Esophagus squamous epithelium (tissue), 5 donors: ENCODE measurements at regions of chr15 and their contacts with region 1.

Region 1: GRCh38 chr15:40906091-40906990 is 12.1 kb downstream of the VPS18 start:
- DNase-seq: no peak
- H3K4me3 ChIP-seq: peak overlapping the region; percentile 29 to 65 (median 54)
- H3K27ac ChIP-seq: peak overlapping the region; percentile 83 to 93 (median 92)
- H3K4me1 ChIP-seq: peaks cover 36 to 85% (median 49%) of the 10 kb centered on the region in 3 donors
- H3K27me3 ChIP-seq: no peaks in the 10 kb centered on the region
- CTCF ChIP-seq: peak; percentile 69 to 91 (median 88)
- POLR2A ChIP-seq: peak in 1 of 4 donors; percentile 20

Region 2: DNA sequence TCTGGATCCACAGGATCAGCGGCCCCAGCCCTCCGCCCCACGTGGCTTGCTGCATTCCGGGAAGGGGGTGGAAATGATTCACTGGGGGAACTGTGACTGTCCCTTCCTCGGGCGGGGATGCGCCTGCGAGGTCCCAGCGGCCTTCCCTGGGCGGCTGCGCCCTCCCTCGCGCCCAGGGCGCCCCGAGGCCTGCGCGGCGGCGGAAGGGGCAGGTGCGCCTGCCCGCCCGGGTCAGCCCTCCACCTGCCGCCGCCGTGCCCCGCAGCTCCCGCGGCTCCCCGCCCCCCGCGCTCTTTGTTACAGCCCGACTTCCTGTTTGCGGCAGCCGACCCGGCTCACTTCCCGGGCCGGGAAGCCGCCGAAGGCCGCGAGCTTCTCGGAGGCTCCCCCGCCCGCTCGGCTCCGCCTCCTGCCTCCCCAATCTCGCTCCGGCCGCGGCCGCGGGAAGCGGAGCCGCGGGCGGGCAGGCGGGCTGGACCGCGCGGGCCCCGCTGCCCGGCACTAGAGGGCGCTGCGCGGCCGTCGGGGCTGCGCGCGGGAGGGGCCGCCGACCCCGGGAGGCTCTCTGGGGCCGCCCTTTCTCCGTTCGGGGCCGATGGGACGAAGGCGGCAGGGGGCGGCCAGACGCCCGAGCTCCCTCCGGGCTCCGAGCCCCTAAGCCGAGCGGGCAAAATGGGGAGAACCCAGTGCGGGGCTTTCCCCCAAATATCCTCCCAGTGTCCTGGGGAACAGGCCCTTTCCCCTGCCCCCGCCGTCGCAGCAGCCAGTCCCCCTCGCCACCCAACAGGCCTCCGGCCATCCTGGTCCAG is 35.4 kb after region 1 on chr15:
- intact Hi-C with region 1: loop called (anchors 5 kb)
- DNase-seq: no peak
- H3K4me3 ChIP-seq: peak overlapping the region; percentile 40 to 74 (median 56)
- H3K27ac ChIP-seq: peak overlapping the region; percentile 57 to 93 (median 85)
- H3K4me1 ChIP-seq: peaks cover 22 to 52% (median 28%) of the 10 kb centered on the region in 3 donors
- H3K27me3 ChIP-seq: no peaks in the 10 kb centered on the region
- CTCF ChIP-seq: peak in 5 of 6 experiments; percentile 11 to 92 (median 79)
- POLR2A ChIP-seq: peak in 2 of 4 donors; percentile 25 to 42

Region 3: DNA sequence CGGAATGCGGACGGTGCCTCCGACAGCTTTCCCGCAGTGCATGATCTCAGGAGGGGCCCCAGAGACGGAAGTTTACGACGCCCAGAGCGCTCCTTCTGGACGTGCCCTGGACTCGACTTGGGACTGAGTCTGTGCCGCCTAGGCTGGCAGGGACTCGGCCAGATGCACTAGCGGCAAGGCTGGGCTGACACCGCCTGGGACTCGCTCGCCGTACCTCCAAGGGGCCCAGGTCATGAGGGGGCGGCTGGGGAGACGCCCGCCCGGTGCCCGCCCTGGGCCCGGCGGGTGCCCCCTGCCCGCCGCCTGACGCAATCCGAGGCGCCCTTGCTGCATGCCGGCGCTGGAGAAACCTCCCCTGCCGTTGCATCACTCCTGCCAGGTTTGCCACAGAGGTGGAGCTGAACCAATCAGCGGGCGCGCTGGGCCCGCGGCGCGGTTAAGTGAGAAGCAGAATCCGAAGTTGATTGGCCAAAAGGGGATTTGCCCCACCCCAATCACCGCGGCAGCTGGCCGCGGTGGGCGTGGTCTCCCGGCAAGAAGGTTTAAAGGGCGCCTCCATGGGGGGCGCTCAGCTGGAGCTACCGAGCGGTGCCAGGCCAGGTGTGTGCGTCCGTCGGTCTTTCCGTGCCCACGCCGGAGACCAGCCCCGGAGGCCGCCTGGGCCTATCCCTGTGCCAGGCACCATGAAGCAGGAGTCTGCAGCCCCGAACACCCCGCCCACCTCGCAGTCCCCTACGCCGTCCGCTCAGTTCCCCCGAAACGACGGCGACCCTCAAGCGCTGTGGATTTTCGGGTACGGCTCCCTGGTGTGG is 46.8 kb after region 1 on chr15 and contains the start of gene CHAC1:
- intact Hi-C with region 1: no loop called
- DNase-seq: peak; percentile 74
- H3K4me3 ChIP-seq: peak within 1 kb of the TSS; percentile 51 to 85 (median 66)
- H3K27ac ChIP-seq: peak within 1 kb of the TSS; percentile 55 to 79 (median 78)
- H3K4me1 ChIP-seq: peaks cover 6 to 48% (median 14%) of the 10 kb centered on the region in 3 donors
- H3K27me3 ChIP-seq: no peaks in the 10 kb centered on the region
- CTCF ChIP-seq: peak in 1 of 6 experiments; percentile 18
- POLR2A ChIP-seq: peak in 1 of 4 donors; percentile 71
- total RNA-seq, gene CHAC1: 0.76 to 16.1 (median 6.4) TPM

Region 4: GRCh38 chr15:41018502-41018901 is 112.2 kb after region 1 on chr15:
- intact Hi-C with region 1: loop called (anchors 5 kb)
- DNase-seq: no peak
- H3K4me3 ChIP-seq: no peak overlapping the region
- H3K27ac ChIP-seq: peak overlapping the region in 2 of 4 donors; percentile 46 to 59
- H3K4me1 ChIP-seq: peaks cover 0 to 31% (median 5%) of the 10 kb centered on the region in 3 donors
- H3K27me3 ChIP-seq: no peaks in the 10 kb centered on the region
- CTCF ChIP-seq: peak in 5 of 6 experiments; percentile 28 to 59 (median 47)
- POLR2A ChIP-seq: no peak

Region 5: DNA sequence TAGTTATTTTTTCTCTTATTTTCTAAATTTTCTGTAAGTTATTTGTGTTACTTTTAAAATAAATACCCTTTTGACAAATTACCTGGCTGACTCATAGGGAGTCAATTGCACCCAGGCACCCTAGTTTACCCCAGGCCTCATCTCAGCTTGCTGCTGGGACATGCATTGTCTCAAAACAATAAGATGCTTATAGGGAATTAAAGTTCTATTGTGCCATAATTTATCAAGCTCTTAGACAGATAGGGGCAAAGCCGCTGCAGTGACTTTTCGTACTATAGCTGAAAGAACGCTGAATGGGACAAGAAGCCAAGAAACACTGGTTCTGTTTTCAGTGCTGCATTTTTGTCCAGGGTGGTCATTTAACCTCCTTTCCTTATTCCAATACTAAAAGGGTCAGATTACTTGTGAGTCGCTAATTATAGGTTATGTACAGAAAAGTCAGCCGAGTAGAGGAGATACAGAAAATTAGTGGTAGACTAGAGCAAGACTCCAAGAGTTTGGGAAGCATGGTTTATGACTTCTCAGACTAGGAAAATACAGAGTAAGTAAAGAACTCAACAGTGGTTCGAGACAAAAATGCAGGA is 274.0 kb after region 1 on chr15:
- intact Hi-C with region 1: loop called (anchors 5 kb)
- DNase-seq: no peak
- H3K4me3 ChIP-seq: no peak overlapping the region
- H3K27ac ChIP-seq: no peak overlapping the region
- H3K4me1 ChIP-seq: no peaks in the 10 kb centered on the region
- H3K27me3 ChIP-seq: no peaks in the 10 kb centered on the region
- CTCF ChIP-seq: no peak
- POLR2A ChIP-seq: no peak

Region 6: GRCh38 chr15:41387646-41388045 is 481.3 kb after region 1 on chr15:
- intact Hi-C with region 1: no loop called
- DNase-seq: no peak
- H3K4me3 ChIP-seq: no peak overlapping the region
- H3K27ac ChIP-seq: no peak overlapping the region
- H3K4me1 ChIP-seq: no peaks in the 10 kb centered on the region
- H3K27me3 ChIP-seq: no peaks in the 10 kb centered on the region
- CTCF ChIP-seq: no peak
- POLR2A ChIP-seq: no peak